Activated CD8-positive, alpha-beta T cell treated with anti-CD3 and anti-CD28 coated beads, Interleukin-2, amount 10 ng/mL, durations not matched to agents 7 days and 5 days (primary cell): ENCODE measurements at regions of chr14 and their contacts with region 1.

Region 1: DNA sequence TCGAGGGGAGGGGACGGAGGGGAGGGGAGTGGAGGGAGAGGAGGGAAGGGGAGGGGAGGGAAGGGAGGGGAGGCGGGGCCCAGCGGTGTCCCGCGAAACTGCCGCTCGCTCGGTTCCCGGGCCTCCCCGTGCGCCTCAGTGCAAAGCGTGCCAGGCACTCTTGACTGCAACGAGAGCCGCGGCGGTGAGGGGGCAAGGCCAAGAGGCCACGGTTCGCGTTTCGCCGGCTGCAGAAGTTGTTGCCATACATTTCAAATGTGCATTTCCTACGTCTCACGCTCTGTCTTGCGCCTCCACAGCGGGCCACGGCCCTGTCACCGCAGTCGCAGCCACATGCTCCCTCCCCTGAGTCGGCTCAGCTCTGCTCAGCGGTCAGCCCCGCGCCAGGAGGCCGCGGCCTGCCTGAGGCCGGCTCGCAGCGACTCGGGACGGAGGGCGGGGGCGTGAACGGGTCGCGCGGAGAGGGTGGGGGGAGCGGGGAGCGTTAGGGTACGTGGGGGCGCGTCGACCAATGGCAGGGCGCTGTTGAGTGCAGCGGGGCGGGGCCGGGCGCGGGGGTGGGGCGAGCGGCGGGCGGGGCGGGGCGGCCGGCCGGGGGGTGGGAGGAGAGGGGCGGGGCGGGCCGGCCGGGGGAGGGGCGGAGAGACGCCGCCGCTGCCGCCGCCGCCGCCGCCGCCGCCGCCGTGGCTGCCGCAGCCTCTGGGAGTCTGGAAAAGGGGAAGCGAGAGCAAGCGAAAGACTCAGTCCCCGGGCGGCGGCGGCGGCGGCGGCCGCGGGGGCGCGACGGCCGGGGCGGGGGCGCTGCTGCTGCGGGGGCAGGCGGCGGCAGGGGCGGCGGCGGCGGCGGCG is at the start of gene PPP2R5C:
- DNase-seq: peak; percentile 91
- ATAC-seq: peak; percentile 84
- H3K4me3 Mint-ChIP-seq: peak within 1 kb of the TSS; percentile 82
- H3K27ac Mint-ChIP-seq: peak within 1 kb of the TSS; percentile 80
- H3K4me1 Mint-ChIP-seq: peaks cover 12% of the 10 kb centered on the region
- H3K27me3 Mint-ChIP-seq: peaks cover 11% of the 10 kb centered on the region
- total RNA-seq, gene PPP2R5C: 218 to 223 TPM

Region 2: GRCh38 chr14:101737414-101738339 is 23.6 kb before region 1 on chr14:
- CTCF ChIA-PET with region 1: interaction called, 12 read pairs
- POLR2A ChIA-PET with region 1: no interaction called
- DNase-seq: peak; percentile 42
- ATAC-seq: peak; percentile 27
- H3K4me3 Mint-ChIP-seq: no peak overlapping the region
- H3K27ac Mint-ChIP-seq: no peak overlapping the region
- H3K4me1 Mint-ChIP-seq: peaks cover 5% of the 10 kb centered on the region
- H3K27me3 Mint-ChIP-seq: no peaks in the 10 kb centered on the region

Region 3: DNA sequence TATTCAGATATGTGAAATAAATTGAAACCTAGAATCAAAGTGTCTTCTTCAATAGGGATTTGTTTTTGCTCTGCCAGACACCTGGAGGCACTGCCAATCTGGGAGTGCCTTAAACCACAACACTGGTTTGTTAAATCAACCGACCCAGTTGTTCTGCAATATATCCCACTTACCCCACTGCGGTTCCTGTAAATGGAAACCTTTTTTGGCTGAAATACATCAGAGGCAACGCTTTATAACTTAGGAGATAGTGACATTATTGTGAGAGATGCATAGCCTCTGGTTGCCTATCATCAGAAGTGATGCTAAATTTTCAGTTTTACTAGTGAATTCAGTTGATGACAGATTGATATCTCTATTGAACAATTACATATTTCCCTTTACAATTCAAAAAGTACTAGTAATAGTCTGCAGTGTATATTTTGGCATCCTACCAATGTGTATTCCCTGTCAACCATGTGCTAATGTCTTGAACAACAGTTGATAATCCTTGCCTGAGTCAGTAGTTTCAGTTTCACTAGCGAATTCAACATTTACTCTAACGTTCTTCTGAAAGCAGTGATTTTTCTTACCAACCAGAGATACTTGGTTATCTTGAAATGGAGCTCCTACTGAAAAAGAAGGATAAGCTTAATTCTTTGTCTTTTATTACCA is 30.8 kb after region 1 on chr14:
- CTCF ChIA-PET with region 1: no interaction called
- POLR2A ChIA-PET with region 1: no interaction called
- DNase-seq: no peak
- ATAC-seq: peak; percentile 84
- H3K4me3 Mint-ChIP-seq: peak overlapping the region; percentile 62
- H3K27ac Mint-ChIP-seq: peak overlapping the region; percentile 83
- H3K4me1 Mint-ChIP-seq: peaks cover 11% of the 10 kb centered on the region
- H3K27me3 Mint-ChIP-seq: no peaks in the 10 kb centered on the region